Heart left ventricle (tissue), 16 donors: ENCODE measurements at regions of chr3 and their contacts with region 1.

Region 1: GRCh38 chr3:13564751-13565560 is 16.0 kb downstream of the FBLN2 start:
- DNase-seq: peak in 3 of 5 donors; percentile 67 to 77 (median 67)
- ATAC-seq: peak; percentile 79 to 86 (median 84)
- H3K4me3 ChIP-seq: no peak overlapping the region
- H3K27ac ChIP-seq: peak overlapping the region in 1 of 12 donors; percentile 37
- H3K4me1 ChIP-seq: peaks cover 7 to 74% (median 36%) of the 10 kb centered on the region in 12 donors
- H3K27me3 ChIP-seq: no peaks in the 10 kb centered on the region
- CTCF ChIP-seq: peak in 1 of 12 donors; percentile 12
- POLR2A ChIP-seq: no peak

Region 2: DNA sequence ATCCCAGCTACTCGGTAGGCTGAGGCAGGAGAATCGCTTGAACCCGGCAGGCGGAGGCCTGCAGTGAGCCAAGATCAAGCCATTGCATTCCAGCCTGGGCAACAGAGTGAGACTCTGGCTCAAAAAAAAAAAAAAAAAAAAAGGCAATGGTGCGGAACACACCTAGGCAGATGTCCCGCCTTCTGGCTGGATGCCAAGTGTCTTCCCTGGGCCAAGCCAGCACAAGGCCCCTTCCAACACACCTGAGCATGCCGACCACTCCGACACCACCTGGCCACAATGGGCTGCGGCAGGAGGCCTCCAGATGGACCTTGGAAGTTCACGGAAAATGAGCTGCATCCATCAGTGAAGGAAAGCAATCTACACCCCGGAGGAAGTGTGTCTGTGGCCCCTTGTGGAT is 163.8 kb before region 1 on chr3:
- intact Hi-C with region 1: no loop called
- DNase-seq: no peak
- ATAC-seq: no peak
- H3K4me3 ChIP-seq: no peak overlapping the region
- H3K27ac ChIP-seq: no peak overlapping the region
- H3K4me1 ChIP-seq: no peaks in the 10 kb centered on the region
- H3K27me3 ChIP-seq: no peaks in the 10 kb centered on the region
- CTCF ChIP-seq: no peak
- POLR2A ChIP-seq: no peak

Region 3: DNA sequence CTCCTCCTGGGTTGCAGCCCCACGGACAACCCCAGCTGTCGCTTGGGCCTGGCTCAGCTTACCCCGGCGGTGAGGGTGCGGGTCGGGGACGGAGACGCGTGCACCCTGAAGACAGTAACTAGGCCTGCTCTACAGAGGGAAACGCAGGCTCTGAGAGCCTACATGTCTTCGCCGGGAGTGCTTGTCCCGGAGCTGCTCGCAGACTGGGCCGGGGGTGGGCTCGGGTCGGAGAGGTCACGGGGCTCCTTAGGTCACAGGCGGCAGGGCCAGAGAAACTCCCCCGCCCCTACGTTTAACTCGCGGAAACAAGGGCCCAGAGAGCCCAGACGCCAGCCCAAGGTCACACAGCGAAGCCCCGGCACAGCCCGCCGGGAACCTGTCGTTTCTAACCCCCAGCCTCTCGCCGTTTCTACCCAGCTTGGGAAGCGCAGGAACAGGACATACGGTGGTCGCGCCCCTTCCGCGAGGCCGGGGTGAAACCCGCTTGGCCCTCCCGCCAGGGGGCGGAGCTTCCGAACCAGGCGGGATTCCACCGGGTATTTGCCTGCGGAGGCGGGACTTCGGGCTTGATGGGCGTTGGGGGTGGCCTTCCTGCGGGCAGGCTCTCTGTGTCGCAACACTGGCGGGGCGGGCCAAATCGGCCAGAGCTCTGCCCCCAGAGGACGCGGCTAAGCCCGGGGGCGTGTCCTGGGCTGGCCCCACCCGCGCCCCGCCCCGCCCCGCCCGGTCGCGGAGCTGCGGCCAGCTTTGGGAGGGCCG is 85.2 kb before region 1 on chr3 and contains the start of gene HDAC11:
- intact Hi-C with region 1: no loop called
- DNase-seq: peak; percentile 100
- ATAC-seq: peak; percentile 97 to 99 (median 98)
- H3K4me3 ChIP-seq: peak within 1 kb of the TSS; percentile 59 to 98 (median 82)
- H3K27ac ChIP-seq: peak within 1 kb of the TSS; percentile 84 to 96 (median 92)
- H3K4me1 ChIP-seq: peaks cover 0 to 31% (median 14%) of the 10 kb centered on the region in 12 donors
- H3K27me3 ChIP-seq: peaks cover 0 to 4% (median 0%) of the 10 kb centered on the region in 9 donors
- CTCF ChIP-seq: peak in 11 of 12 donors; percentile 6 to 61 (median 35)
- POLR2A ChIP-seq: peak; percentile 39 to 88
- total RNA-seq, gene HDAC11: 20.8 to 49.4 (median 30.7) TPM

Region 4: GRCh38 chr3:13507769-13508339 is 57.1 kb before region 1 on chr3:
- intact Hi-C with region 1: loop called in 2 of 10 experiments (anchors 5 to 10 kb)
- DNase-seq: peak in 2 of 5 donors; percentile 53 to 64
- ATAC-seq: peak in 3 of 4 donors; percentile 32 to 55 (median 46)
- H3K4me3 ChIP-seq: no peak overlapping the region
- H3K27ac ChIP-seq: peak overlapping the region in 1 of 12 donors; percentile 24
- H3K4me1 ChIP-seq: peaks cover 0 to 7% (median 0%) of the 10 kb centered on the region in 12 donors
- H3K27me3 ChIP-seq: no peaks in the 10 kb centered on the region
- CTCF ChIP-seq: no peak
- POLR2A ChIP-seq: no peak

Region 5: DNA sequence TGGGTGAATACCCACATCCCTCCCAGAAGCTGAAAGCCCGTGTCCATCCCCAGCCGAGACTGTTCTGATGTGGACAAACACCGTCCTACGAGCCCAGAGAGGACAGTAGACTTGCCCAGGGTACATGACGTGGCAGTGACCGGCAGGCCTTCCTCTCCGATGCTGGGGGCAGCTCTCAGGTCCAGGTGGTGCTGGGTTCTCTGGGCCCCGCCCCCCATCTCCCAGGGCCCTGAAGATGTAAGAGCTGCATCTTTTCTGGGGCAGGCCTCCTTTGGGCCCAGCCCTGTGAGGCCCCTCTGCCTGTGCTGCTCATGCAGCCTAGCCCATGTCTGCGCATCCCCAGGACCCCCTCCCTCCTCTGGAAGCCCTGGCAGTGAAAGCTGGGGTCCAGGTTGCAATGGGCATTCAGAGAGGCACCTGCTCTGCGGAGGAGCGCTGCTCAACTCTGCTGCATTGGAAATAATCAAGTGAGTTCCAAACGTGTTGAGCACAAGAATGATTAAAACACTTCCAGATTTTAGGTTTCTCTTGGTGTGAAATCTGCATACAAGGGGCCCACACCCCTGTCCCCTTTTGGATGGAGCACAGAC is 55.9 kb after region 1 on chr3:
- intact Hi-C with region 1: no loop called
- DNase-seq: peak in 2 of 5 donors; percentile 9 to 42
- ATAC-seq: no peak
- H3K4me3 ChIP-seq: no peak overlapping the region
- H3K27ac ChIP-seq: no peak overlapping the region
- H3K4me1 ChIP-seq: no peaks in the 10 kb centered on the region
- H3K27me3 ChIP-seq: no peaks in the 10 kb centered on the region
- CTCF ChIP-seq: no peak
- POLR2A ChIP-seq: no peak